PC-9 (cell line): ENCODE measurements at regions of chr2 and their contacts with region 1.

Region 1: DNA sequence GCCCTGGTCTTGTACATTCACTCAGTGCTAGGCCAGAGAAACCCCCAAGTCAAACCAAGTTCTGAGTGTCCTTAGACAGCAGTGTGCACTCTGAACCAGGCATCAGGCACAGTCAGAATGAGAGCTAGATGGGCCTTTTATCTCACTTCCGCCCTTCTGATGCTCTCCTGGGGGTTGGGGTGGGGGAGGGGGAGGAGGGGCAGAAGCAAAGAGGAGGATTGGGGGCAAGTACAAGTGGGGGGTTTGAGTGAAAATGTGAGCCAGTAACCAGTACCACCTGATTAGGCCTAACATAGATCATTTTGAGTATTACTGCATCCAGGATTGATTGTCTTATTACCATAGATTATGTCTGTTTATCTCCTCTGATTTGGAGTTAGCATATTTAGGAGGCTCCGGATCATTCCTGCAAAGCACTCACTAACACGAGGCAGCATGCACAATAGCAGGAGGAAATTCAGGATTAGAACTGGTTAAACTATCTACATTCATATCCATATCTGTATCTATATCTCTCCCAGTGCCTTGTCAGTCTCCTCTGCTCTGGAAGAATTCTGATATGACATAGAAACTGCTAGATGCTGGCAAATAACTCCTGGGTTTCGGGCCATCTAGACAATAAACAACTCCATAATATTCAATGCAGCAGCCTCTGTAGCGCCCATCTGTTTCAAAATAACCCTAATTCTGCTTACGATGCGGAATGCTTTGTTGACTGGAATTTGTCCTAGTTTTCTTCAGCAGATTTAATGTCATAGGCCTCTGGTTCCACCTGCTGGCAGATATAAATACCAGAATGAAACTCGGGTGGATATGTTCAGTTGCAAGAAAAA is 149.1 kb downstream of the RHBDD1 start:
- DNase-seq: peak; percentile 22 to 43
- H3K4me3 ChIP-seq: no peak overlapping the region
- H3K27ac ChIP-seq: no peak overlapping the region
- H3K4me1 ChIP-seq: no peaks in the 10 kb centered on the region
- H3K27me3 ChIP-seq: no peaks in the 10 kb centered on the region
- CTCF ChIP-seq: peak; percentile 72

Region 2: DNA sequence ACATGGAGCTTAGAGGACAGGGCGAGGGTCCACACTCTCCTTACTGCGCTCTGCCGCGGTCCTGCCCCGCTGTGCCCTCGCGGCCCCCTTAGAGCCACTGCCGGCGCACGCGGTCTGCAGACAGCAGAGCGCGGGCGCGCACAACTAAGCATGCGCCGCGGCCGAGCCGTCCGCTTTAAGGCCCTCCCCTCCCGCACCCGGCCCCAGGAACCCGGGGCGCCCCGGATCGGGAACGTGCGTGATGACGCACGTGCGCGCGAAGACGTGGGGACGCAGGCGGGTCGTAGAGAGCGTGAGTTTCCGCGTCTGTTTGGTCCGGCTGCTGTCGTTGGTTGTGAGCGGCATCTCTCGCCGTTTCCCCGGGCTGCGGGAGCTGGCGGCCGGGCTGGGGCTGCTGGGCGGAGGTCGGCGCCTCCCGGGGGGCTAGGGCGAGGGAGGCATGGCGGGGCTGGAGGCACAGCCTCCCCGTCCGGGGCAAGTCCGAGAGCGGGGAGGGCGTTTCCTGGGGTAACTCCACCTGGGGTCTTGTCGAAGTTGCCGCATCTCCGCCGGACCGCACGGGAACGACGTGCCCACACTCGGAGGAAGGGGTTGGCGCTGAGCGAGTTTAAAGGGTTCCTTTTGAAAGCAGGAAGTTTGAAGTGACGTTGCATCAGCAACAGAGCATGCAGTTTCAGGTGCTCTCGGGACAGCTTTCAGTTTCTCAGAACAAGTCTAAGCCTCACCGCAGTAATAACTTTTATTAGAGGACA is 149.0 kb before region 1 on chr2 and contains the start of gene RHBDD1:
- CTCF ChIA-PET with region 1: no interaction called
- POLR2A ChIA-PET with region 1: no interaction called
- intact Hi-C with region 1: no loop called
- DNase-seq: peak; percentile 85 to 91
- H3K4me3 ChIP-seq: peak within 1 kb of the TSS; percentile 75
- H3K27ac ChIP-seq: peak within 1 kb of the TSS; percentile 98
- H3K4me1 ChIP-seq: peaks cover 29% of the 10 kb centered on the region
- H3K27me3 ChIP-seq: no peaks in the 10 kb centered on the region
- CTCF ChIP-seq: no peak
- total RNA-seq, gene RHBDD1: 22.3 and 23.2 TPM in 2 replicates

Region 3: GRCh38 chr2:226934546-226935201 is 50.3 kb before region 1 on chr2:
- CTCF ChIA-PET with region 1: no interaction called
- POLR2A ChIA-PET with region 1: no interaction called
- intact Hi-C with region 1: no loop called
- DNase-seq: no peak
- H3K4me3 ChIP-seq: no peak overlapping the region
- H3K27ac ChIP-seq: no peak overlapping the region
- H3K4me1 ChIP-seq: no peaks in the 10 kb centered on the region
- H3K27me3 ChIP-seq: no peaks in the 10 kb centered on the region
- CTCF ChIP-seq: no peak

Region 4: GRCh38 chr2:227106845-227107759 is 122.1 kb after region 1 on chr2:
- CTCF ChIA-PET with region 1: no interaction called
- POLR2A ChIA-PET with region 1: no interaction called
- intact Hi-C with region 1: loop called (anchors 10 kb)
- DNase-seq: peak; percentile 37 to 50
- H3K4me3 ChIP-seq: no peak overlapping the region
- H3K27ac ChIP-seq: no peak overlapping the region
- H3K4me1 ChIP-seq: no peaks in the 10 kb centered on the region
- H3K27me3 ChIP-seq: no peaks in the 10 kb centered on the region
- CTCF ChIP-seq: peak; percentile 81